Activated CD4-positive, alpha-beta memory T cell treated with anti-CD3 and anti-CD28 coated beads for 36 hours (primary cell): ENCODE measurements at regions of chr17 and their contacts with region 1.

Region 1: DNA sequence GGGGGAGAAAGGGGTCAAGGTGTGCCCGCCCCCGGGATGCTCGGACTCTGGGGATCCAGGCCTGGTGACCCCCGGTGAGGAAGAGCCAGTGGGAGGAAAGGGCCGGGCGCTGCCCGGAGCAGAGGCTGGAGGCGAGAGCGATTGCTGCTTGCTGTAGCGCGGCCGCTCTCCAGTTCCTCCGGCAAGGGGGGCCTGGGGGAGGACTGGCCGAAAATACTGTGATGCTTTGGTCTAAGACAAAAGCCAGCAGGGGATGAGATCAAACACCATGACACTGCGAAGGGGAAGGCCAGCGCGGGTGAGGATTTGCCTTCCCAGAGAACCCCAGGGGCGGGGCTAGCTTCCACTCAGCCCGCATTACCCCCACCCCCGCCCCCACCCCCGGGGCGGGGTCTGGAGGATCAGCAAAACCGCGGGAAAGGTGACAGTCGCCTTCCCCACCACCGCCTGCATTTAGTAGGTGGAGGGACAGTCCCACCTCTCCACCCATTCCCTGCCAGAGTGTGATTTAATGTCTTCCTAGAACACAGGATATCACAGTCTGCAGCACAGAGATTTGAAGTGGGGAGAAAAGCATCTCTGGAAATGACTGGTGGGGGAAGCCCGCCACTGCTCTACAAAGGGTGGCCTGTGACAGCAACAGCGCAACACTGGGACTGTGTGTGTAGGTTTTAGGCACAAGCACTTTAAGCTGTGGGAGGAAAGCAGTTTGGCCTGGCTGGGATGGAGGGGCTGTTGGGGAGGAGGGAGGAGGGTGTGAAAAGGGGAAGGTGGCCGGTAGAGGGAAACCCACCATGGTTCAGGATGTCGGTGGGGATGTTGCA is 25.7 kb downstream of the MRC2 start:
- DNase-seq: peak; percentile 96
- H3K4me3 Mint-ChIP-seq: peak overlapping the region; percentile 74
- H3K27ac Mint-ChIP-seq: peak overlapping the region; percentile 54
- H3K4me1 Mint-ChIP-seq: peaks cover 24% of the 10 kb centered on the region
- H3K27me3 Mint-ChIP-seq: peaks cover 27% of the 10 kb centered on the region

Region 2: DNA sequence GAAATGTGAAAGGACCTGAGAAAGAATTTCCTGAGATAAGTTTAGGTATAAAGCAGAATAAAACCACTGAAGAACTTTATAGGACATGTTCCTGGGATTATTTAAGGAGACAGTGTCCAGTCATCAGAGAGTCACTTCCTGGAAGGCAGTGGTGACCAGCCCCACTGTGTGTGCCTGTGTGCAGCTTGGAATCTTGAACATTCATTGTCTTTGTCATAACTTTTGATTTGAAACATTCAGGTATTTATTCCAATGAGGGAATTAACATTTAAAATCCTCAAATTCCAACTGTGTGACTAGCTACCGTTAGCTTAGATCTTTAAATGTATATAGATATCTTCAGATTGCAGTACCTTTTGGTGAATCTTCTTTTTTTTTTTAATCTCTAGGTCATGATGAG is 87.4 kb before region 1 on chr17:
- CTCF ChIA-PET with region 1: no interaction called
- POLR2A ChIA-PET with region 1: interaction called, 4 read pairs
- intact Hi-C with region 1: loop called (anchors 1 kb)
- DNase-seq: no peak
- H3K4me3 Mint-ChIP-seq: no peak overlapping the region
- H3K27ac Mint-ChIP-seq: peak overlapping the region; percentile 47
- H3K4me1 Mint-ChIP-seq: peaks cover 32% of the 10 kb centered on the region
- H3K27me3 Mint-ChIP-seq: no peaks in the 10 kb centered on the region

Region 3: GRCh38 chr17:62724398-62725146 is 71.4 kb after region 1 on chr17:
- CTCF ChIA-PET with region 1: no interaction called
- POLR2A ChIA-PET with region 1: interaction called, 4 read pairs
- intact Hi-C with region 1: loop called (anchors 1 kb)
- DNase-seq: peak; percentile 92
- H3K4me3 Mint-ChIP-seq: peak overlapping the region; percentile 24
- H3K27ac Mint-ChIP-seq: peak overlapping the region; percentile 8
- H3K4me1 Mint-ChIP-seq: peaks cover 21% of the 10 kb centered on the region
- H3K27me3 Mint-ChIP-seq: peaks cover 52% of the 10 kb centered on the region

Region 4: GRCh38 chr17:62968445-62968923 is 315.3 kb after region 1 on chr17:
- CTCF ChIA-PET with region 1: no interaction called
- POLR2A ChIA-PET with region 1: no interaction called
- intact Hi-C with region 1: loop called (anchors 1 kb)
- DNase-seq: peak; percentile 58
- H3K4me3 Mint-ChIP-seq: no peak overlapping the region
- H3K27ac Mint-ChIP-seq: no peak overlapping the region
- H3K4me1 Mint-ChIP-seq: peaks cover 28% of the 10 kb centered on the region
- H3K27me3 Mint-ChIP-seq: peaks cover 18% of the 10 kb centered on the region

Region 5: DNA sequence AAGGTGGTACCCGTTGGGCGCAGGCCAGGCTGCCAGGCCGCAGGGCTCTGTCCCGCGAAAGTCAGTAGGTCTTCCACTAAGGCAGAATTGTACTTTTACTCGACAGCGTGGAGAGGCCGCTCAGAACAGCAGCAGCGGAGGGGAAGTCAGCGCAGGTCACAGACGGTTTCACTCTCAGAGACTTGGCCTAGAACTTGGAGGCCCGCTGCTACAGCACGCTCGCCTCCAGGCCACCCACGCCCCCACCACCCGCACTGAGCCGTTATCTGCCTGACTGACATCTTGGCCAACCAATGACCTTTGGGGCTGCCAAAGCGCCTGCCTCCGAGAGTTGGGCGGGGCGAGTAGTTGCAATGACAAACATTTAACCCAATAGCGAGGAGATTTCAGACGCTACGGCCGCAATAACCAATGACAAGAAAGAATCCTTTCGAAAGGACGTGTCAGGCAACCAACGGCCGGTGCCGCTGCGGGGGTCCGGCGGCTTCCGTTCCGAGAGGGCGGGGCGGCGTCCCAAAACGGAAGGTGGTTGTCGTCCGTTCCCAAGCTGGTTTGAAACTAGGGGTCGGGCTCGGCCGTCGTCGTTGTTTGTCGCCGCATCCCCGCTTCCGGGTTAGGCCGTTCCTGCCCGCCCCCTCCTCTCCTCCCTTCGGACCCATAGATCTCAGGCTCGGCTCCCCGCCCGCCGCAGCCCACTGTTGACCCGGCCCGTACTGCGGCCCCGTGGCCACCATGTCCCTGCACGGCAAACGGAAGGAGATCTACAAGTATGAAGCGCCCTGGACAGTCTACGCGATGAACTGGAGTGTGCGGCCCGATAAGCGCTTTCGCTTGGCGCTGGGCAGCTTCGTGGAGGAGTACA is 897.0 kb after region 1 on chr17 and contains the start of gene DCAF7:
- CTCF ChIA-PET with region 1: no interaction called
- POLR2A ChIA-PET with region 1: no interaction called
- intact Hi-C with region 1: loop called (anchors 1 kb)
- DNase-seq: peak; percentile 100
- H3K4me3 Mint-ChIP-seq: peak within 1 kb of the TSS; percentile 85
- H3K27ac Mint-ChIP-seq: peak within 1 kb of the TSS; percentile 96
- H3K4me1 Mint-ChIP-seq: peaks cover 32% of the 10 kb centered on the region
- H3K27me3 Mint-ChIP-seq: no peaks in the 10 kb centered on the region
- total RNA-seq, gene DCAF7: 118 to 119 TPM